Panc1 (cell line): ENCODE measurements at regions of chr10 and their contacts with region 1.

Region 1: DNA sequence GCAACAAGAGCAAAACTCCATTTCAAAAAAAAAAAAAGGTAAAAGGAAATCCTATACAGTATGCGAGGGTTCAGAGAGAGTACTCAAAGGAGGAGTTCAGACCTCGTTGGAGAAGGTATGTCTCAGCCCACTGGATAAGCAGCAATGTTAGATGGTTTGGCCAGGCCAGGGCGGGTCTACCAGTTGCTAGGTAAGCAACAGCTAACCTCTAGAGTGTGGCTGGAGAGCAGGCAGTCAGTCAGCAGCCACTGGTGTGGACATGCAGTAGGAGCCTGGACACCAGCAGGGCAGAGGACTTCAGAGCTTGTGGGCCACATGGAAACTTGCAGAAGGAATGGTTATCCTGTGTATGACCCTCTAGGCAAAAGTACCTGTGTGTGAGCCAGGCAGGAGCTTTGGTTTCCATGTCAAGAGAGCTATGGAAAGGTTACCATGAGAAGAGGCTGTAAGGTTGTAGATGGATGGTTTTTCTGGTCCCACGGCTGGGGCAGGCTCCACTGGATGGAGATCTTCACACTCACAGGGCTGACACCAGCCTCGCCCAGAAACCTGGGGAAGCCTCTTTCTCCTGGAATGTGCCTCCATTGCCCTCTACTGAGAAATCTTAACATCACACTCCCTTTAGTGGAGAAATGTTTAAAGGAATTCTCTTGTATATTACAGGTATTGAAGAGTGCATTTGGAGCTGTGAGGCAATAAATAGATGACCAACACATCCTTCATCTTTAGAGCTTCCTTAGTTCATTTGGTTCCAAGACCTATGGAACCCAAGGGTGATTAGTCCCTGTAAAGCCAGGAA is 63.6 kb downstream of the CCDC186 start:
- DNase-seq: no peak
- ATAC-seq: peak; percentile 85
- H3K4me3 ChIP-seq: no peak overlapping the region
- H3K27ac ChIP-seq: no peak overlapping the region
- H3K4me1 ChIP-seq: no peaks in the 10 kb centered on the region
- H3K27me3 ChIP-seq: peaks cover 7% of the 10 kb centered on the region; the same call in 1 of the 2 replicates
- CTCF ChIP-seq: peak; percentile 71

Region 2: GRCh38 chr10:113859261-113859660 is 251.1 kb before region 1 on chr10:
- CTCF ChIA-PET with region 1: no interaction called
- POLR2A ChIA-PET with region 1: interaction called, 17 read pairs
- in situ Hi-C with region 1: no loop called
- intact Hi-C with region 1: no loop called
- DNase-seq: no peak
- ATAC-seq: no peak
- H3K4me3 ChIP-seq: no peak overlapping the region
- H3K27ac ChIP-seq: no peak overlapping the region
- H3K4me1 ChIP-seq: peaks cover 16% of the 10 kb centered on the region; the same call in 1 of the 2 replicates
- H3K27me3 ChIP-seq: no peaks in the 10 kb centered on the region
- CTCF ChIP-seq: no peak

Region 3: GRCh38 chr10:113922787-113923570 is 187.4 kb before region 1 on chr10:
- CTCF ChIA-PET with region 1: no interaction called
- POLR2A ChIA-PET with region 1: interaction called, 12 read pairs
- in situ Hi-C with region 1: no loop called
- intact Hi-C with region 1: no loop called
- DNase-seq: no peak
- ATAC-seq: peak; percentile 49; the same call in 1 of the 2 replicates
- H3K4me3 ChIP-seq: no peak overlapping the region
- H3K27ac ChIP-seq: no peak overlapping the region
- H3K4me1 ChIP-seq: no peaks in the 10 kb centered on the region
- H3K27me3 ChIP-seq: no peaks in the 10 kb centered on the region
- CTCF ChIP-seq: peak; percentile 53

Region 4: DNA sequence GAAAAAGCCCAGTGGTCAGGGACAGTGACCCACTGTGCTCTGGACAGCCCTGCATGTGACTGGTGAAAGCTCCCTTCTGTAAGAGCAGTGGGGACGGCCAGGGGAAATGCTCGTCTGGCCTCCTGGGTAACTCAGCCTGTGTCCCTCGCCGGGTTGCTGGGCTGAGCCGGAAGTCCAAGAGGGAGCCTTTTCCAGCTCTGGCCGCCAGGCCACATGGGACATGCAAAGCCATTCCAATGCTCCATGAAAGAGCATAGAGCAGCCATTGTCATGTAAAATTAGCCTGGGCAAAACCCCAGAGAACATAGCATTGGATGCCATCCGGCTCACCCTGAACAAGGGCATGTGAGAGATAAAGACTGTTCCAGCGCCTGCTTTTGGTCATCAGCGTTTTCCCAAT is 131.6 kb before region 1 on chr10:
- CTCF ChIA-PET with region 1: no interaction called
- POLR2A ChIA-PET with region 1: no interaction called
- in situ Hi-C with region 1: no loop called
- intact Hi-C with region 1: no loop called
- DNase-seq: no peak
- ATAC-seq: no peak
- H3K4me3 ChIP-seq: no peak overlapping the region
- H3K27ac ChIP-seq: no peak overlapping the region
- H3K4me1 ChIP-seq: no peaks in the 10 kb centered on the region
- H3K27me3 ChIP-seq: no peaks in the 10 kb centered on the region
- CTCF ChIP-seq: no peak

Region 5: DNA sequence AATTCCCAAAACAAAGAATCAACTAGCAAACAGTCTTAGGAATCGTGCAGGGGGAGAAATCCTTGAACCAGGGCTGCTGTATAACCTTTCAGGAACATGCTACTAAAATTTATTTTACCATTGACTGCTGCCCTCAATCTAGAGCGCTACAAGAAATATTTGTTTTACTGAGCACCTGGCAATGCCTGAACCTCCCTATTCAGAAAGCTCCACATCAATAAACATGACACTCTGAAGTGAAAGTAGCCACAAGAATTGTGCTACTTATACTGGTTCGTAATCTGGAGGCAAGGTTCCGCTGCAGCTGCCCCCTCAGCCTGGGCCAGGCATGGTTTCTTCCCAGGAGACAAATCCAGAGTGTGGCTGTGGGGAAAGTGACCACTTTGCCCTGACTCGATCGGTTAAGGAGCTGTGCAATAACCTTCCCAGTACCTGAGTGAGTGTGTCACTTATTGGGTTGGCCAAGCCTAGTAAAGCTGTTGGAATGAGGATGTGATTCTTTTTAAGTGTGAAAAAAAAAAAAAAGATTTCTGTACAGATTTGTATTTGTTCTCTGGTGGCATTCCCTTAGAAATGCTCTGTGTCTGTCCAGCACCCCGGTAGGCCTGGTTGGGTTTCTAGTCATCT is 136.4 kb after region 1 on chr10:
- CTCF ChIA-PET with region 1: interaction called, 12 read pairs
- POLR2A ChIA-PET with region 1: no interaction called
- in situ Hi-C with region 1: no loop called
- intact Hi-C with region 1: no loop called
- DNase-seq: no peak
- ATAC-seq: no peak
- H3K4me3 ChIP-seq: no peak overlapping the region
- H3K27ac ChIP-seq: no peak overlapping the region
- H3K4me1 ChIP-seq: peaks cover 5% of the 10 kb centered on the region
- H3K27me3 ChIP-seq: peaks cover 13% of the 10 kb centered on the region
- CTCF ChIP-seq: no peak